ENCODE measurements at regions of chr20 and their contacts with region 1.

Region 1: DNA sequence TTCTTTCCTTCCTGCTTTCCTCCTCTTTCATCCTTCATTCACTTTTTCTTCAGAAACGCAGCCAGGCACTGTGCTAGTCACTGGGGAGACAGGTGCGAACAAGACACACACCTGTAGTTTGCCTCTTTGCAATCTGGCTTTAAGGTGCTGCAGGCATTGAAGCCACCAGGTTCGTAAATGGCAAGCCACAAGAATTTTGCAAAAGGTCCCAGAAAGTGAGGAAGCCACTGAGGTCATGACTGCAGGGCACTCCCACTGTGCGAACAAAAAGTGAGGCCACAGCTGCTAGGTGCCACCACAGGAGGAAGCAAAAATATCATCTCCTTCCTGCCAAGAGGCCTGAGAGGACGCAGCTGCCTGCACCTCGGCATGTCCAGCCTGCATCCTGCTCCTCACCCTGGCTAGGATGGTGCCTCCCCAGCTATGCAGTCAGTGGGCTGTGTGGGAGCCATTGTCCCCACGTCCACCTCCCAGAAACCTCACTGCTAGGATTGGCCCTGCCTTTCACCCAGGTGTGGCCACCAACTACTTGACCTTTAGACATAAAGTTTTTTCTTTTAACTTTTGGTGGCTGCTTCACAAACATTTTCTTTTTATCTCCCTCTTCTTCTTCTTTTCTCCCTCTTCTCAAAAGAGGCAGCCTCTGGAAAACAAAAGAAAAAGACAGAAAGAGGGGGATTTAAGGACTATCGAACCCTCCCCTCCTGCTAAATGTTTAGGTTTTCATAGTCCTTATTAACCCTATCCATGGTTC is 230.8 kb downstream of the BCAS1 start:
- DNase-seq: peak; percentile 96
- ATAC-seq: peak; percentile 78
- H3K4me3 ChIP-seq: no peak overlapping the region
- H3K27ac ChIP-seq: peak overlapping the region; percentile 70
- H3K4me1 ChIP-seq: peaks cover 47% of the 10 kb centered on the region
- H3K27me3 ChIP-seq: no peaks in the 10 kb centered on the region
- CTCF ChIP-seq: no peak
- EP300 ChIP-seq: peak; percentile 39 to 54; a peak in 2 of 4 replicates
- POLR2A ChIP-seq: peak; percentile 53; the same call in 1 of the 2 replicates
- RAD21 ChIP-seq: 0 out of 2 replicates have a peak, but pooled peaks have one; percentile 3

Region 2: DNA sequence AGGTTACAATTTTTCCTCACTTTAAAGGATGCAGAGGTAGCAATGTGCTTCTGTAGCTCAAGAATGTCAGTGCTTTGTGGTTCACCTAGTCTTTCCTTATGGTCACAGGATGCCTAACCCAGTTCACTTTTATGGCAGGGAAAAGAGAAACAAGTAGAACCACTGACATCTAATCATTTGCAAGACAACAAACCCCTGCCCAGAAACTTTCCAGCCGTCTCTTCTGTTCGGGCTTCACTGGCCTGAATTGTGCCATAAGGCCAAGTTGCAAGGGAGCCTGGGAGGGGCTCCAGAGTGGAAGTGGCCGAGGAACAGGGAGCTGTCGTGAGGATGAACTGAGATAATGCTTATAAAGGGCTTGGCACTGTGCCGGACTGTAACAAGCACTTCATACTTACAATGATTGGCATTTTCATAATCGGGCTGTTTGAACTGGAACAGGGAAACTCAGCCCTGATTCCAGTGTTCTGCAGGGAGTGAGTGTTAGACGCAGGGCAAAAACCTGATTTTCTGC is 18.2 kb after region 1 on chr20:
- CTCF ChIA-PET with region 1: interaction called, 4 read pairs
- POLR2A ChIA-PET with region 1: interaction called, 7 read pairs
- RAD21 ChIA-PET with region 1: interaction called, 6 read pairs
- SMC1A ChIA-PET with region 1: interaction called, 17 read pairs
- in situ Hi-C with region 1: no loop called
- intact Hi-C with region 1: no loop called
- DNase-seq: no peak
- ATAC-seq: no peak
- H3K4me3 ChIP-seq: no peak overlapping the region
- H3K27ac ChIP-seq: no peak overlapping the region
- H3K4me1 ChIP-seq: 0 out of 2 replicates have a peak, but pooled peaks cover 2% of the 10 kb centered on the region
- H3K27me3 ChIP-seq: no peaks in the 10 kb centered on the region
- CTCF ChIP-seq: no peak
- EP300 ChIP-seq: no peak
- POLR2A ChIP-seq: no peak
- RAD21 ChIP-seq: no peak

Region 3: GRCh38 chr20:53995949-53996348 is 156.3 kb after region 1 on chr20:
- CTCF ChIA-PET with region 1: no interaction called
- POLR2A ChIA-PET with region 1: no interaction called
- RAD21 ChIA-PET with region 1: no interaction called
- SMC1A ChIA-PET with region 1: no interaction called
- in situ Hi-C with region 1: no loop called
- intact Hi-C with region 1: no loop called
- DNase-seq: no peak
- ATAC-seq: no peak
- H3K4me3 ChIP-seq: no peak overlapping the region
- H3K27ac ChIP-seq: no peak overlapping the region
- H3K4me1 ChIP-seq: no peaks in the 10 kb centered on the region
- H3K27me3 ChIP-seq: no peaks in the 10 kb centered on the region
- CTCF ChIP-seq: no peak
- EP300 ChIP-seq: no peak
- POLR2A ChIP-seq: no peak
- RAD21 ChIP-seq: no peak